ENCODE measurements at regions of chr10 and their contacts with region 1.

Region 1: GRCh38 chr10:45660876-45661411 is 11.6 kb downstream of the ZFAND4 start:
- DNase-seq: no peak
- H3K4me3 ChIP-seq: no peak overlapping the region
- H3K4me3 Mint-ChIP-seq: no peak overlapping the region
- H3K27ac Mint-ChIP-seq: no peak overlapping the region
- H3K4me1 ChIP-seq: no peaks in the 10 kb centered on the region
- H3K4me1 Mint-ChIP-seq: no peaks in the 10 kb centered on the region
- H3K27me3 ChIP-seq: no peaks in the 10 kb centered on the region; the same call in 1 of the 2 replicates
- H3K27me3 Mint-ChIP-seq: no peaks in the 10 kb centered on the region
- CTCF ChIP-seq: no peak

Region 2: GRCh38 chr10:45640941-45641340 is 20.0 kb before region 1 on chr10:
- CTCF ChIA-PET with region 1: no interaction called
- POLR2A ChIA-PET with region 1: interaction called, 10 read pairs
- intact Hi-C with region 1: no loop called
- DNase-seq: no peak
- H3K4me3 ChIP-seq: no peak overlapping the region
- H3K4me3 Mint-ChIP-seq: no peak overlapping the region
- H3K27ac Mint-ChIP-seq: no peak overlapping the region
- H3K4me1 ChIP-seq: no peaks in the 10 kb centered on the region
- H3K4me1 Mint-ChIP-seq: no peaks in the 10 kb centered on the region
- H3K27me3 ChIP-seq: no peaks in the 10 kb centered on the region
- H3K27me3 Mint-ChIP-seq: no peaks in the 10 kb centered on the region
- CTCF ChIP-seq: no peak